Activated T-helper 1 cell treated with anti-CD3 and anti-CD28 coated beads, Interleukin-12 subunit alpha, Interleukin-12 subunit beta, Interleukin-2, Interleukin-4 antibody, amounts not matched to agents 30 ng/mL and 10 ng/mL and 1 ng/mL, durations not matched to agents 14 hours and 24 hours and 36 hours (primary cell): ENCODE measurements at regions of chr2 and their contacts with region 1.

Region 1: DNA sequence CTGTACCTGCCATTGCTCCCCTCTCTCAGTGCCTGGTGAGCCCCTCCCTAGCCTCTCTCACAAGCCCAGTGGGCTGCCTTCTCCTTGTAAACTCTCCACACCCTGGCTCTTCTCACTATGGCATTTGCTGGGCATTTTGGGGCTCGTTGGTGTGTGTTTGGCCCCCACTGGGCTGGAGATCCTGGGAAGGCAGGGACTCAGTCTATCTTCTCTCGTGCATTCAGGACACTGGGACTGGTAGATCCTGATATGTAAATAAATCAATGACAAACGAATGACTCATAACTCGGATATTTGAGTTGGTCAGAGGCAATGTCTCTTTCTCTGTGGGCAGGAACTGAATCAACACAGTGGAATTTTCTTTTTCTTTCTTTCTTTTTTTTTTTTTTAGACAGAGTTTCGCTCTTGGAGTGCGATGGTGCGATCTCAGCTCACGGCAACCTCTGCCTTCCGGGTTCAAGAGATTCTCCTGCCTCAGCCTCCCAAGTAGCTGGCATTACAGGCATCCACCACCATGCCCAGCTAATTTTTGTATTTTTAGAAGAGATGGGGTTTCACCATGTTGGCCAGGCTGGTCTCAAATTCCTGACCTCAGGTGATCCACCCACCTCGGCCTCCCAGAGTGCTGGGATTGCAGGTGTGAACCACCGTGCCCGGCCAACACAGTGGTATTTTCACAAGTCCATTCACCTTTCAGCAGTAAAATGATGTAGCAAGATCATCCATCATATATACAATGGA is 144.6 kb upstream of the SPRED2 start:
- DNase-seq: no peak
- H3K4me3 Mint-ChIP-seq: no peak overlapping the region
- H3K27ac Mint-ChIP-seq: no peak overlapping the region
- H3K4me1 Mint-ChIP-seq: no peaks in the 10 kb centered on the region
- H3K27me3 Mint-ChIP-seq: peaks cover 19% of the 10 kb centered on the region

Region 2: GRCh38 chr2:65040400-65041261 is 536.4 kb before region 1 on chr2:
- intact Hi-C with region 1: loop called (anchors 1 kb)
- DNase-seq: peak; percentile 67
- H3K4me3 Mint-ChIP-seq: no peak overlapping the region
- H3K27ac Mint-ChIP-seq: no peak overlapping the region
- H3K4me1 Mint-ChIP-seq: peaks cover 25% of the 10 kb centered on the region
- H3K27me3 Mint-ChIP-seq: no peaks in the 10 kb centered on the region

Region 3: DNA sequence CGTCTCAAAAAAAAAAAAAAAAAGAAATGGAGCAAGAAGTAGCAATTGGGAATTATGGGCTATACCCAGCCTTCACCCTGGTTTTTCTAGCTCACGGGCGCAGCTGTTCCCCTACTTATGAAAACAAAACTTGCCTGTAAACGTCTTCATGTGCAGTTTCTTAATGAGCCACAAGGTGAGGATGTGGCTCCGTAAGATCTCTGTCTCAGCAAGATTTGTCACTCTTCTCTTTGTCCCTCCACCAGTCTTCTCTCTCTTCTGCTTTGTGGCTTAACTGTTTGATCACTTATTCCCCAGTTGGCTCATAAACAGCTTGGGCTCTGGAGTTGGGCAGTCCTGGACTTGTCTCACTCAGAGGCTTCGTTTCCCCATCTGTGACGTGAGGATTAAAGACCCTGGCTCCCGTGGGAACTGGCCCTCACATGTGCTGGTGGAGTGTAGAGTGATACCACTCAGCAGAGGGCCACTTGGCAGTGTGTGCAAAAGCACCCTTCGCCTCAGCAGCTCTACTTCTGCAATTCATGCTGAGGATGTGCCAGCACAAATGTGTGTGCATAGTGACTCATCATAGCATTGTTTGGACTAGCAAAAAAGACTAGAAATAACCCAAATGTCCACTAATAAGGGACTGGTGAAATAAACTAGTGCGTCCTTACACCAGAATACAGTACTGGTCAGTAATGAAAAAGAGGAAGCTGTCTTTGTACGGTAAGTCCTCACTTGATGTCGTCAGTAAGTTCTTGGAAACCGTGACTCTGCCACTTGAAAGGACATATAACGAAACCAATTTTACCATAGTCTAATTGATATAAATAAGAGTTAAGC is 512.1 kb before region 1 on chr2:
- intact Hi-C with region 1: loop called (anchors 1 kb)
- DNase-seq: peak; percentile 38
- H3K4me3 Mint-ChIP-seq: no peak overlapping the region
- H3K27ac Mint-ChIP-seq: peak overlapping the region; percentile 68
- H3K4me1 Mint-ChIP-seq: peaks cover 38% of the 10 kb centered on the region
- H3K27me3 Mint-ChIP-seq: peaks cover 4% of the 10 kb centered on the region

Region 4: GRCh38 chr2:65129826-65130663 is 447.0 kb before region 1 on chr2 and contains the start of gene RAB1A:
- intact Hi-C with region 1: loop called (anchors 5 kb)
- DNase-seq: peak; percentile 98
- H3K4me3 Mint-ChIP-seq: peak within 1 kb of the TSS; percentile 98
- H3K27ac Mint-ChIP-seq: peak within 1 kb of the TSS; percentile 99
- H3K4me1 Mint-ChIP-seq: peaks cover 30% of the 10 kb centered on the region
- H3K27me3 Mint-ChIP-seq: peaks cover 16% of the 10 kb centered on the region
- total RNA-seq, gene RAB1A: 73.4 and 81.6 TPM in 2 replicates

Region 5: GRCh38 chr2:65186872-65187851 is 389.9 kb before region 1 on chr2:
- intact Hi-C with region 1: loop called (anchors 1 kb)
- DNase-seq: peak; percentile 50
- H3K4me3 Mint-ChIP-seq: no peak overlapping the region
- H3K27ac Mint-ChIP-seq: no peak overlapping the region
- H3K4me1 Mint-ChIP-seq: peaks cover 8% of the 10 kb centered on the region
- H3K27me3 Mint-ChIP-seq: peaks cover 16% of the 10 kb centered on the region

Region 6: DNA sequence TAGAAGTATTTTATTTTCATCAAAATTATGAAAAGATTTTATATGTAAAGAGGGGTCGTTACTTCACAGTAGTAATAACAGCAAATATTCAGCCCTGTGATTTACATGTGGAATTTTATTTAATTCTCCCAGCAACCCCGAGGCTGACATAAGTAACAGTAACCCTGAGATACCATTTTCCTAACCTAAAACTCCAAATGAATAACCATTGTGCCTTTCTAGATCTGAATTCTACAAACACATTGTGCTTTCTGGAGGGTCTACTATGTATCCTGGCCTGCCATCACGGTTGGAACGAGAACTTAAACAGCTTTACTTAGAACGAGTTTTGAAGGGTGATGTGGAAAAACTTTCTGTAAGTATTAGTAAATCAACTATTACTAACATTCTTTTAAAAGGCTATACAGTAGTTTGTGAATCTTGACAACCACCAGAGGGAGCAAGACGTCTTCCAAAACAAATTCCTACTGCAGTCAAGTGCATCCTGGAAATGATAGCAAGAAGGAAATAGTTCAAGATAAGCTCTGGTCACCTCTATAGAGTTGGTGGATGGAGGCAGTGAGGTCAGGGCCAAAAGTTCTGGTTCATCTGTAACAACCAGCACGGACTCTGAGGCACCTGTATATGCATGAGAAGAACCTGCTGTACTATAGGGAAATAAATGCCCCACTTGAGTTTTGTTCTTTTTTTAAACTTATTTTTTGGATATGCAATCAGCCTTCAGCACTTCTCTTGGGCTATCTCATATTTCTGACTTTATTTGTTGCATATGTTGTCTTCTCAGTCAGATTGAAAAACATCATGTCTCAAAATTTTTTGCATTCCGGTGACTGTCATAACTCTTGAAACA is 312.0 kb before region 1 on chr2:
- intact Hi-C with region 1: loop called (anchors 1 kb)
- DNase-seq: no peak
- H3K4me3 Mint-ChIP-seq: no peak overlapping the region
- H3K27ac Mint-ChIP-seq: no peak overlapping the region
- H3K4me1 Mint-ChIP-seq: peaks cover 17% of the 10 kb centered on the region
- H3K27me3 Mint-ChIP-seq: no peaks in the 10 kb centered on the region

Region 7: GRCh38 chr2:65382776-65383357 is 194.2 kb before region 1 on chr2:
- intact Hi-C with region 1: loop called (anchors 2 kb)
- DNase-seq: peak; percentile 63
- H3K4me3 Mint-ChIP-seq: peak overlapping the region; percentile 56
- H3K27ac Mint-ChIP-seq: peak overlapping the region; percentile 62
- H3K4me1 Mint-ChIP-seq: peaks cover 67% of the 10 kb centered on the region
- H3K27me3 Mint-ChIP-seq: peaks cover 7% of the 10 kb centered on the region

Region 8: GRCh38 chr2:65525616-65526231 is 51.3 kb before region 1 on chr2:
- intact Hi-C with region 1: no loop called
- DNase-seq: no peak
- H3K4me3 Mint-ChIP-seq: no peak overlapping the region
- H3K27ac Mint-ChIP-seq: no peak overlapping the region
- H3K4me1 Mint-ChIP-seq: no peaks in the 10 kb centered on the region
- H3K27me3 Mint-ChIP-seq: peaks cover 18% of the 10 kb centered on the region

Region 9: DNA sequence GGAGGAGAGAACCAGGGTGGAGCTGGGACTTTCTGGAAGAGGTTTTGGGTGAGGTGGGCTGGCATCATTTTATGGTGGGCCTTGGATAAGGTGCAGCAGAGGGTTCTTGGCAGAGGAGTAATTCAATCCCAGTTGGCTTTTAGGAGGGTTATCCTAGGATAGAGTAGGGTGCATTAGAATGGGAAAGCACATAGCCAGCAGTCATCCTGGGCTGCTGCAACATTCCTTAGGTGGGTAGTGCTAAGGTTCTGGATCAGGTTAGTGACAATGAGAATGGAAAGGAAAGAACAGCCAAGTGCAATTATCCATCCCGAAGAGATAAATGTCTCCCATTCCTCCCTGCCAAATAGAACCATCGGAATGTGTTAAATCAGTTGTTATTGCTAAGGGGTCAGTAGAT is 12.6 kb after region 1 on chr2:
- intact Hi-C with region 1: no loop called
- DNase-seq: no peak
- H3K4me3 Mint-ChIP-seq: no peak overlapping the region
- H3K27ac Mint-ChIP-seq: no peak overlapping the region
- H3K4me1 Mint-ChIP-seq: no peaks in the 10 kb centered on the region
- H3K27me3 Mint-ChIP-seq: peaks cover 7% of the 10 kb centered on the region

Region 10: DNA sequence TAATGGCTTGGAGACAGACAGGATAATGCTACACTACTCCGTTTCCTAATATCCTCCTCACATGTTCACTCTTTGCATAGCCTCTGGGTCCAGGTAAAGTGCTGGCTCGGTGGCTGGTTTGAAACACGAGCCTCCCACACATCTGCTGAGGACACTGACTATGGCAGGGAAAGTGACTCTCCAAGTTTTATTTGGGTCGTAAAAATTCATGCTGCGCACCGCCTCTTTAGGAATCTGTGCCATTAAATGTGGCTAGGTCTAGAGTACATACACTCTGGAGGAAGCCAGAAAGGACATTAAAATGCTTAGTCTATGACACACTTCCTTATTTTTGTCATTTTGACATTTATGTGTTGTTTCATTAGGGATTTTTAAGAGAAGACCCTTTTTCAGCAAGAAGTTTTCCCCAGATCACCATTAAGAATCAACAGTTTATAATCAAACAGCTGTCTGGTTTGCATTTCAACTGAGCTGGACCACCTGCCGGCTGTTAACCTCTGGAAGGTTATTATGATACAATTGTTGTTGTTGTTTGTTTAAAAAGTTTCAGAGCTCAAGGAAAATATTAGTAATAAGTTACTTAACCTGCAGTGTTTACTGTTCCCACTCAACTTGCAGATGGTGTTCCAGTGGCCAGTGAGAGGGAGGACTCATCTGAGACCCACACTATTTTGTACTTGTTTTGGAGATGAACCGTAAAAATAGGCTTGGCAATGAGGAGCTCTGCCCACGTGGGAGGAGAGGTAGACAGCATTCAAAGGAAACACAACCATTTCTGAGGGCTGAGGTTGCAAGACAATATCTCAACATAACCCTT is 414.6 kb after region 1 on chr2:
- intact Hi-C with region 1: no loop called
- DNase-seq: no peak
- H3K4me3 Mint-ChIP-seq: no peak overlapping the region
- H3K27ac Mint-ChIP-seq: no peak overlapping the region
- H3K4me1 Mint-ChIP-seq: no peaks in the 10 kb centered on the region
- H3K27me3 Mint-ChIP-seq: no peaks in the 10 kb centered on the region